B cell (primary cell): ENCODE measurements at regions of chr16 and their contacts with region 1.

Region 1: DNA sequence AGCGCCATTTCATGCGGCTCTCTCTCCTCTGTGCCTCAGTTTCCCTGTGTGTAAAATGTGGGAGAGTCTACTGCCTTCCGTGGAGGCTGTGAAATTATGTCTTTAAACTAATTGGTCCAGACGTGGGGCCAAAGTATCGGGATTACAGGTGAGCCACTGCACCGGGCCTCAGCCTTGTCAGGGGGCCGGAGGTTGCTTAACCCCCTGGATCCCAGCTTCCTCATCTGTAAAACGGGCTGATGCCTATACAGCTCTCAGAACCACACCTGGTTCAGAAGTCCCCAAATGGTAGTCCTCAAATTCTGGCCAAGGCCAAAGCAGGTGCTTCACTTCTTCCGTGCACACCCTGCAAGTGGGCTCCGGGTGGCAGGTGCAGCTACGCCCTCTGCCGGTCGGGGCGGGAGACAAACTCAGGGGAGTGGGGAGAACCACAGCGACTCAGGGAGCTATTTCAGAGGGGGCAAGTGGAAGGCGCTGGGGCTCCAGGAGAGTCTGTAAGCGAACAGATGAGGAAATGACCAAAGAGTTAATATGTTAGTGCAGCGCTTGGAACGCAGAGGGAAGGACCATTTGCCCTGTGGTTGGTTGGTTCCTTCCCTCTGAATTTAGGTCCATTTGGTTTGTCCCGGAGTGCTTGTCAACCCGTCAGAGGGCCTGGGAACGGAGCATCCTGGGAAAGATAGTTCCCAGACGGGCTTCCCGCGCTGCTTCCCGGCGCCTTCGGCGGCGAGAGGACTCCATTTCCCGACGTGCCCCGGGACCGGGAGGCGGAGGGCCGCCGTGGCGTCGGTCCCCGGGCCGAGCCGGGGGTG is at the start of gene MGRN1:
- DNase-seq: peak; percentile 96
- ATAC-seq: peak; percentile 91
- H3K4me3 ChIP-seq: peak within 1 kb of the TSS; percentile 67 to 90 (median 73)
- H3K4me3 Mint-ChIP-seq: peak within 1 kb of the TSS; percentile 100
- H3K27ac ChIP-seq: peak within 1 kb of the TSS; percentile 77 to 97
- H3K27ac Mint-ChIP-seq: peak within 1 kb of the TSS; percentile 98
- H3K4me1 ChIP-seq: peaks cover 18 to 27% of the 10 kb centered on the region in 2 donors
- H3K4me1 Mint-ChIP-seq: peaks cover 35% of the 10 kb centered on the region
- H3K27me3 ChIP-seq: no peaks in the 10 kb centered on the region
- H3K27me3 Mint-ChIP-seq: no peaks in the 10 kb centered on the region
- CTCF ChIP-seq: peak; percentile 86
- total RNA-seq, gene MGRN1: 89.2 and 89.8 TPM in 2 replicates

Region 2: GRCh38 chr16:4285158-4285557 is 339.1 kb before region 1 on chr16:
- CTCF ChIA-PET with region 1: no interaction called
- POLR2A ChIA-PET with region 1: no interaction called
- intact Hi-C with region 1: no loop called
- DNase-seq: no peak
- ATAC-seq: no peak
- H3K4me3 ChIP-seq: no peak overlapping the region
- H3K4me3 Mint-ChIP-seq: no peak overlapping the region
- H3K27ac ChIP-seq: no peak overlapping the region
- H3K27ac Mint-ChIP-seq: no peak overlapping the region
- H3K4me1 ChIP-seq: peaks cover 7 to 8% of the 10 kb centered on the region in 2 donors
- H3K4me1 Mint-ChIP-seq: peaks cover 6% of the 10 kb centered on the region
- H3K27me3 ChIP-seq: peaks cover 0 to 3% (median 0%) of the 10 kb centered on the region in 4 experiments
- H3K27me3 Mint-ChIP-seq: peaks cover 12% of the 10 kb centered on the region
- CTCF ChIP-seq: no peak

Region 3: DNA sequence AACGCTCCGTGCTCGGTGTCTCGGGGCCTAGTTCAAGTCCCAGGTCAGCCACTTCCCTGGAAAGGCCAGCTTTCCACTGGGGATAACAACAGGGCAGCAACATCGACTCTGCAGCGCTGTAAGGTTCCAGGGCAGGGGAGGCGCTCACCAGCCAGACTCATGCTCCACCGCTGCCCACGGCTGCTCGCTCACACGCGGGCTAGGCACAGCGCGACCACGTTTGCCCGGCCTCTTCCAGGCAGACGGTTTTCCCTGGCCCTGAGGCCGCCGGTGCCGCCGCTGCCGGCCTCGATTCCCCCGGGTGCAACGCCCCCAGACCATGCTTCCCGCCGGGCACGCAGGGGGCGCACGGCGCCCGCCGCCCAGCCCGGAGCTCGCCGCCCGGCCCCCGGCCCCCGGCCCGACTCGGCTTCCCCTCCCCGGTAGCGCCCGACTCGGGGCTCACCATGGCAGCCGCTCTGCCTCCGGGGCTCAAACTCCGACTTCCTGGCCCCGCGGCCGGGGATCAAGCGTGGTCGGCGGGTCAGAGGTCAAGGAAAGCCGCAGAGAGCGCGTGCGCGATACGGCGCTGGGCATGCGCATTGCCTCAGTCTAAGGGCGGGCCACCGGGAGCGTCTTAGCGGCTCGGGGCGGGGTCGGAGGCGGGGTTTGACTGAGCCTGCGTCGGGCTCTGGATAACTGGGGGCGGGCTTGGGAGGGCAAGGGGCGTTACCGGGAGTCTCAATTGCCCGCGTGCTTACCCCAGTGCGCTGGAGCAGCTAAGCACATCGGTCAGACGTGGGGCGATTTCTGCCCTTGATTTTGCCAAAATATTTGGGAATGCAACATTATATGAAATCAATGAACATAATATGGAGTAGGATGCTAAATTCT is 273.2 kb before region 1 on chr16 and contains the start of gene PAM16:
- CTCF ChIA-PET with region 1: no interaction called
- POLR2A ChIA-PET with region 1: no interaction called
- intact Hi-C with region 1: loop called (anchors 2 kb)
- DNase-seq: peak; percentile 97
- ATAC-seq: peak; percentile 92
- H3K4me3 ChIP-seq: peak within 1 kb of the TSS; percentile 56 to 84 (median 81)
- H3K4me3 Mint-ChIP-seq: peak within 1 kb of the TSS; percentile 96
- H3K27ac ChIP-seq: peak within 1 kb of the TSS; percentile 57 to 78
- H3K27ac Mint-ChIP-seq: peak within 1 kb of the TSS; percentile 95
- H3K4me1 ChIP-seq: peaks cover 9 to 17% of the 10 kb centered on the region in 2 donors
- H3K4me1 Mint-ChIP-seq: peaks cover 22% of the 10 kb centered on the region
- H3K27me3 ChIP-seq: no peaks in the 10 kb centered on the region
- H3K27me3 Mint-ChIP-seq: no peaks in the 10 kb centered on the region
- CTCF ChIP-seq: peak; percentile 33
- total RNA-seq, gene PAM16: 56.6 and 57.3 TPM in 2 replicates

Region 4: DNA sequence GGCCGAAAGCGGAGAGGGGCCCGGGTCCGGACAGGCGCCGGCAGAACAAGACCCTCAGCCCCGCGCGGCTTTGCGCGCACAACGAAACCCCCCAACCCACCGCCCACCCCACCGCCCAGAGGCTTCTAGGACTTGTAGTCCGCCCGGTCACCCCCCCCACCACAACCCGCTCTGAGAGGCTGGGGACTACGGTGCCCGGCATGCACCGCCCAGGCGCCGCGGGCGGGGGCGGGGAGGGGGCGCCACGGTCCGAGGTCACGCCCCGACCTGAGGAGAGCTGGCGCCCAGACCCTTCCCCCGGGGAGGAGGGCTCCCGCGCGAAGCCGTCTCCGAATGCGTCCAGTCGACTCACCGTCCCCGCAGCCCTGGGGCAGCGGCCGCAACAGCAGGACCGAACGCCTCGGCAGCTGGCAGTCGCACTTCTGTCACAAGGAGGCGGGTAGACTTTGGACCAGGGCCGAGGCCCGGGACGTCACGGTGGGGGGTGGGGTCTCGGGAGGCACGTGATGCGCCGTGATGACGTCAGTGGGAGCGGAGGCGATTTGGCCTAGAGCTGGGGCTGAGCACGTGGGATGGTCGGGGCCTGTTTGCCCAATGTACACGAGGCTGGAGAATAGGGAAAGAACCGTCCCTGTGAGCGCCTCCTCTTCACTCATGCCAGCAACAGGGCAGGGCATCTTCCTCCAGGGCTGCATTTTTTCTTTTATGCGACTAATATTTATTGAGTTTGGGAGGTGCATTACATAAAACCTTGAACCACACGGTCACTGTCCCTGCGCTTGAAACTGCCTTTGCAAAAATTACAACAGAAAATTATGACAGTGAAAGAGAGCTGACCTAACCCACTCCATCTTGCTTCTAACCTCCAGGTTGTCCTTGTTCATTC is 85.6 kb before region 1 on chr16 and contains the start of gene CDIP1:
- CTCF ChIA-PET with region 1: no interaction called
- POLR2A ChIA-PET with region 1: interaction called, 3 read pairs
- intact Hi-C with region 1: loop called (anchors 2 kb)
- DNase-seq: peak; percentile 99
- ATAC-seq: peak; percentile 91
- H3K4me3 ChIP-seq: peak within 1 kb of the TSS; percentile 7 to 93 (median 73)
- H3K4me3 Mint-ChIP-seq: peak within 1 kb of the TSS; percentile 92
- H3K27ac ChIP-seq: peak within 1 kb of the TSS; percentile 87 to 95
- H3K27ac Mint-ChIP-seq: peak within 1 kb of the TSS; percentile 96
- H3K4me1 ChIP-seq: peaks cover 7 to 13% of the 10 kb centered on the region in 2 donors
- H3K4me1 Mint-ChIP-seq: peaks cover 14% of the 10 kb centered on the region
- H3K27me3 ChIP-seq: no peaks in the 10 kb centered on the region
- H3K27me3 Mint-ChIP-seq: no peaks in the 10 kb centered on the region
- CTCF ChIP-seq: peak; percentile 24
- total RNA-seq, gene CDIP1: 18.0 and 20.3 TPM in 2 replicates

Region 5: GRCh38 chr16:4556112-4556511 is 68.1 kb before region 1 on chr16 and contains the start of gene C16orf96:
- CTCF ChIA-PET with region 1: no interaction called
- POLR2A ChIA-PET with region 1: no interaction called
- intact Hi-C with region 1: no loop called
- DNase-seq: no peak
- ATAC-seq: no peak
- H3K4me3 ChIP-seq: no peak within 1 kb of the TSS
- H3K4me3 Mint-ChIP-seq: no peak within 1 kb of the TSS
- H3K27ac ChIP-seq: no peak within 1 kb of the TSS
- H3K27ac Mint-ChIP-seq: no peak within 1 kb of the TSS
- H3K4me1 ChIP-seq: no peaks in the 10 kb centered on the region
- H3K4me1 Mint-ChIP-seq: no peaks in the 10 kb centered on the region
- H3K27me3 ChIP-seq: no peaks in the 10 kb centered on the region
- H3K27me3 Mint-ChIP-seq: peaks cover 10% of the 10 kb centered on the region
- CTCF ChIP-seq: no peak
- total RNA-seq, gene C16orf96: 0.66 and 0.79 TPM in 2 replicates

Region 6: GRCh38 chr16:4580245-4580644 is 44.0 kb before region 1 on chr16:
- CTCF ChIA-PET with region 1: no interaction called
- POLR2A ChIA-PET with region 1: no interaction called
- intact Hi-C with region 1: loop called (anchors 1 kb)
- DNase-seq: no peak
- ATAC-seq: no peak
- H3K4me3 ChIP-seq: no peak overlapping the region
- H3K4me3 Mint-ChIP-seq: no peak overlapping the region
- H3K27ac ChIP-seq: no peak overlapping the region
- H3K27ac Mint-ChIP-seq: no peak overlapping the region
- H3K4me1 ChIP-seq: peaks cover 0 to 1% of the 10 kb centered on the region in 2 donors
- H3K4me1 Mint-ChIP-seq: no peaks in the 10 kb centered on the region
- H3K27me3 ChIP-seq: peaks cover 0 to 3% (median 0%) of the 10 kb centered on the region in 4 experiments
- H3K27me3 Mint-ChIP-seq: no peaks in the 10 kb centered on the region
- CTCF ChIP-seq: no peak

Region 7: GRCh38 chr16:4693296-4693955 is 69.2 kb after region 1 on chr16 and contains the start of gene NUDT16L1:
- CTCF ChIA-PET with region 1: no interaction called
- POLR2A ChIA-PET with region 1: interaction called, 4 read pairs
- intact Hi-C with region 1: loop called (anchors 2 kb)
- DNase-seq: peak; percentile 97
- ATAC-seq: peak; percentile 95
- H3K4me3 ChIP-seq: peak within 1 kb of the TSS; percentile 50 to 85 (median 81)
- H3K4me3 Mint-ChIP-seq: peak within 1 kb of the TSS; percentile 91
- H3K27ac ChIP-seq: peak within 1 kb of the TSS; percentile 34 to 87
- H3K27ac Mint-ChIP-seq: peak within 1 kb of the TSS; percentile 90
- H3K4me1 ChIP-seq: peaks cover 15 to 19% of the 10 kb centered on the region in 2 donors
- H3K4me1 Mint-ChIP-seq: peaks cover 22% of the 10 kb centered on the region
- H3K27me3 ChIP-seq: no peaks in the 10 kb centered on the region
- H3K27me3 Mint-ChIP-seq: no peaks in the 10 kb centered on the region
- CTCF ChIP-seq: no peak
- total RNA-seq, gene NUDT16L1: 38.5 and 43.2 TPM in 2 replicates

Region 8: DNA sequence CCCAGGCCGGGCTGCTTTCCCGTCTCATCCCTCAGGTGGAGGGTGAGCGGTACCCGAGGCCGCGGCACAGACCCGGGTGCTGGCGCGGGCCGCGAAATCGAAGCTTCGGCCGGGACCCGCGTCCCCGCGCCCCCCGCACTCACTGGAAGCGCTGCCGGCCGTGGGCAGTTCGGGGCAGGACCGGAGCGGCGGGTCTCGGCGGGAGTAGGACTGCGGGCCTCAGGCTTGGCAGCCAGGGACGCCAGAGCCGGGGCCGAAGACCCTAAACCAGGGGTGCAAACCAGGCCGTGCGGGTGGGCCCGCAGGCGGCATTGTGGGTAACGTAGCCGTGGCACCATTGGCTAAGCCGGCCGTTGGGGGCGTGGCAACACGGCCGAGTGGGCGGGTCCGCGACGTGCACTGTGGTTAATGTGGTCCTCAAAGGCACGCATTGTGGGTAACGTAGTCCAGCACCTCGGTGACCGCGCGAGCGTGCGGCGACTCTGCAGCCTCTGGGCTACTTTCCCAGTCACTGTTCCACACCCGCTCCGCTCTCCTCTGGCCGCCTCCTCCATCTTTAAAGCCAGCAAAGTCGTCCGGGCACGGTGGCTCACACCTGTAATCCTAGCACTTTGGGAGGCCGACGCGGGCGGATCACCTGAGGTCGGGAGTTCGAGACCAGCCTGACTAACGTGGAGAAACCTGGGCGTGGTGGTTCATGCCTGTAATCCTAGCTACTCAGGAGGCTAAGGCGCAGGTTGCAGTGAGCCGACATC is 142.8 kb after region 1 on chr16 and contains the start of gene ZNF500:
- CTCF ChIA-PET with region 1: no interaction called
- POLR2A ChIA-PET with region 1: no interaction called
- intact Hi-C with region 1: loop called (anchors 1 kb)
- DNase-seq: peak; percentile 95
- ATAC-seq: peak; percentile 91
- H3K4me3 ChIP-seq: peak within 1 kb of the TSS; percentile 69 to 94 (median 87)
- H3K4me3 Mint-ChIP-seq: peak within 1 kb of the TSS; percentile 98
- H3K27ac ChIP-seq: peak within 1 kb of the TSS in 1 of 2 donors; percentile 80
- H3K27ac Mint-ChIP-seq: peak within 1 kb of the TSS; percentile 95
- H3K4me1 ChIP-seq: peaks cover 15 to 33% of the 10 kb centered on the region in 2 donors
- H3K4me1 Mint-ChIP-seq: peaks cover 31% of the 10 kb centered on the region
- H3K27me3 ChIP-seq: no peaks in the 10 kb centered on the region
- H3K27me3 Mint-ChIP-seq: no peaks in the 10 kb centered on the region
- CTCF ChIP-seq: no peak
- total RNA-seq, gene ZNF500: 26.5 and 35.7 TPM in 2 replicates

Region 9: DNA sequence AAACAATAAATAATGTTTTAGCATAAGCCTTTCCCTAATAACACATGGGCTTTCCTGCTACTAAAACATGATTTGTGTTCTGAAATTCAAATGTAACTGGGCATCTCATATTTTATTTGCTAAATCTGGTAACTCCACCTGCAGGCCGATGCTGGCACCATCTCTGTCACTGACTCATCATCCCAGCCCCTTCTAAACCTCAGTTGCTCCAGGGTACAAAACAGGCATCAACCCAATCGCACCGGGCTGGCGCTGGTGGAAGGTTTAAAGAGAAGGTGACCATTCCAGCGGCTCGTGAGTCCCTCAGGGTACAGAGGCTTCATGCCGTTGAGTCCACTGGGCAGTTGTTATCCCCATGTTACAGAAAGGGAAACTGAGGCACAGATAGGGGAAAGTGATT is 285.6 kb after region 1 on chr16:
- CTCF ChIA-PET with region 1: no interaction called
- POLR2A ChIA-PET with region 1: no interaction called
- intact Hi-C with region 1: no loop called
- DNase-seq: no peak
- ATAC-seq: no peak
- H3K4me3 ChIP-seq: no peak overlapping the region
- H3K4me3 Mint-ChIP-seq: no peak overlapping the region
- H3K27ac ChIP-seq: no peak overlapping the region
- H3K27ac Mint-ChIP-seq: no peak overlapping the region
- H3K4me1 ChIP-seq: no peaks in the 10 kb centered on the region
- H3K4me1 Mint-ChIP-seq: no peaks in the 10 kb centered on the region
- H3K27me3 ChIP-seq: no peaks in the 10 kb centered on the region
- H3K27me3 Mint-ChIP-seq: peaks cover 5% of the 10 kb centered on the region
- CTCF ChIP-seq: no peak